Cardiac septum (tissue), 1 donor: ENCODE measurements at regions of chr12 and their contacts with region 1.

Region 1: GRCh38 chr12:65881965-65882413 is 57.7 kb downstream of the HMGA2 start:
- DNase-seq: peak; percentile 93

Region 2: GRCh38 chr12:65740873-65741600 is 141.0 kb before region 1 on chr12:
- intact Hi-C with region 1: loop called (anchors 5 kb)
- DNase-seq: peak; percentile 90

Region 3: DNA sequence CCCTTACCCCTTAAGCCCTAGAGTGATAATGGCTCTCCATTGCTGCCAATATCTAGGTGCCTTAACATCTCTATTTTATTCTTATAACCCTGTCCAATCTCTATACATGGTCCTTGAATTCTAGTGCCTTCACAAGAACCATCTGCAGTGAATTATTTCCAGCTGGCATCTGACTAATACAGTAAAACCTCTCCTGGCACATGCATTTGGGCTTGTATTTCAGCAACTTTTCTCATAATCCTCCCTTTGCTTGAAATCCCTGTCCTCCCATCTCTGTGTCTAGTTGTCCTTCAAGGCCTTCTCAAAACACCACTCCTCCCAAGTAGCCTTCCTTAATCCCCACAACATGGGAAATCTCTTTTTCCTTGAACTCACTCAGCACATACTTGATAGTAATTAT is 72.0 kb before region 1 on chr12:
- intact Hi-C with region 1: no loop called
- DNase-seq: no peak

Region 4: GRCh38 chr12:65825617-65826512 is 56.1 kb before region 1 on chr12:
- intact Hi-C with region 1: loop called (anchors 5 kb)
- DNase-seq: no peak

Region 5: GRCh38 chr12:66055837-66056319 is 173.9 kb after region 1 on chr12:
- intact Hi-C with region 1: no loop called
- DNase-seq: no peak